ENCODE measurements at regions of chr1 and their contacts with region 1.

Region 1: DNA sequence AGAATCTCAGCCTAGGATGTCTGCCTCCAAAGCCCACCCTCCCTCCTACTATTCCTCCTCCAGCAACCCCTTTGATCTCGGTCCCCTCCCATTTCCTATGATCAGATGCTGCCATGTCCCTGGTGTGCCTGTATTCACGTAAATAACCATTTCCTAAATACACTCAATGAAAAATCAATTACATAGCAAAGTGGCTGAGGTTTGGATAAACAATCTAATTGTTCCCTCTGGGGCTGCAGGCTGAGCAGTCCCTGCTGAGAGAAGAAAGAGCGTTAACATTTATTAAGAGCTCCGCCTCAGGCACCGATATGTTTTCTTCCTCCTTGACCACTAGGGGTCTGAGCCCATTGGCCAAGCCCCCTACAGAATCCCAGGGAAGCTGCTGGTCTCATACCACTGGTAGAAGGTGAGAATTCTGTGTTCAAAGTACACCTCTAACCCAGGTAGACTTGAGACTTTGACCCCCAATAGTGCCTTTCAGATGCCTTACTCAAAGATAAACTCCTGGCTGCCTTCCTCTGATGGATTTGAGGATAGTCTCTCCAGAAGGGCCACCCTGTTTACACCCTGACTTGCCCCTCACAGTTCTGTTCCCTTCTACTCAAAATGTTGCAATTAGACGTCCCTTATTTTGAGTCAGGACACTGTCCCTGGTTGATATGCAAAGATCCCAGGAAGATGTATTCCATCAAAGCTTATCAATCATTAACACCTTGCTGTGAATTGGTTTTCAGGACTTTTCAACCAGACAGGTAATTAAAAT is 33.9 kb upstream of the CAMK1G start:
- DNase-seq: no peak
- H3K4me3 ChIP-seq: no peak overlapping the region
- H3K27ac ChIP-seq: no peak overlapping the region
- H3K4me1 ChIP-seq: peaks cover 16% of the 10 kb centered on the region
- H3K27me3 ChIP-seq: no peaks in the 10 kb centered on the region
- CTCF ChIP-seq: no peak

Region 2: DNA sequence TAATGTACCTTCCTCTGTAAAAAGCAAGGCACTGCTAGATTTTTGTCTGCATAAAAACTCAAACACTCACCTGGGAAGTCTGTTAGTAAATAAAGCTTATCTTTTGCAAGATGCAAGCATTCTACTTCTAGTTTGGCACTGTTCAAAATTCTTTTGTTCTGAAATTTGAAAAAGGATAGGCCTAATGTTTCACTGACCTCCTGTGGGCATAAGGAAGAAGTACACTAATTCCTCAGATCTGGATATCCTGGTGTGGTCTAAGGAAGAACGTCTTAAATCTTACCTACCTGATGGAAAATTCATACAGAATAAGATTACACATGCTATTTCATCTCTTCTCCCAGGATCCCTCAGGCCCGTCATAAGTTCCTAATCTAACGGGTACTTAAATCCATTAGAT is 59.6 kb before region 1 on chr1:
- CTCF ChIA-PET with region 1: no interaction called
- dilution Hi-C with region 1: loop called (anchors 5 kb)
- in situ Hi-C with region 1: no loop called
- intact Hi-C with region 1: no loop called
- DNase-seq: peak; percentile 26
- H3K4me3 ChIP-seq: no peak overlapping the region
- H3K27ac ChIP-seq: no peak overlapping the region
- H3K4me1 ChIP-seq: peaks cover 26% of the 10 kb centered on the region
- H3K27me3 ChIP-seq: no peaks in the 10 kb centered on the region
- CTCF ChIP-seq: peak; percentile 74 to 77

Region 3: DNA sequence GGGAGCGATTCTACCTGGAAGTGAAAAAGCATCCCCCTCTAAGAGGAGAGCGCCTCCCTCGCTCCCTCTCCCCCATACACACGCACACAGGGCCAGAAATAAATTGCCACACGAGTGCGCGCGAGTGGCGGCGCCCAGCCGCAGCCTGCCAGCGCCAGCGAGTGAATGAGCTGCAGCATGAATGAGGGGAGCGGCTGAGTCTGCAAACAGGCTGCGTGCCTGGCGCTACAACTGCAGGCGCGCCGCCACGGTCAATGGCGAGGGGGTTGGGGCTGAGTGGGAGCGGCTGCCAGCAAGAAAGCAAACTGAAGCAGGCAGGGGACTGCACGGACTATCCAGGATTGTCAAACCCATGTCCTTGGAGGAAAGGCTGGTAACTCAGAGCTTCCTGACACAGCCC is 36.0 kb after region 1 on chr1:
- CTCF ChIA-PET with region 1: no interaction called
- dilution Hi-C with region 1: loop called (anchors 5 kb)
- in situ Hi-C with region 1: no loop called
- intact Hi-C with region 1: no loop called
- DNase-seq: no peak
- H3K4me3 ChIP-seq: no peak overlapping the region
- H3K27ac ChIP-seq: no peak overlapping the region
- H3K4me1 ChIP-seq: peaks cover 17% of the 10 kb centered on the region
- H3K27me3 ChIP-seq: no peaks in the 10 kb centered on the region
- CTCF ChIP-seq: peak in 1 of 2 donors; percentile 5